K562 (cell line): ENCODE measurements at regions of chr1 and their contacts with region 1.

Region 1: DNA sequence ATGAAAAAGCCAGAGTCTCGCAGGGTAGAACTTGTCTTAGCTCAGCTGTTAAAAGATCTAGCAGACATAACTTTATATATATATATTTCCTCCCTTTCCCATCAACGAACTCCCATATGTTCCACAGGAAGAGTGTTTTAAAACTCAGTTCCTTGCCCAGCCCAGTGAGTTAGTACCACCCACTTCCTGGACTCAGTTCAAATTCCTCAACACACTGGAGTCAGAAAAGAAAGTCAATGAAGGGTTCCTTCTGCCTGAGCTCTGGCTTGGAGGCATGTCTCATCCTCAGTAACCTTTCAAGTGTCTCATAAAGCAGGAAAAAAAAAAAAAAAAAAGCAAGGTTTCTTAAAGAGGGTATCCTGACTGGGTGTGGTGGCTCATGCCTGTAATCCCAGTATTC is 15.6 kb downstream of the TPM3 start:
- DNase-seq: no peak
- ATAC-seq: no peak
- H3K4me3 ChIP-seq: no peak overlapping the region
- H3K27ac ChIP-seq: no peak overlapping the region
- H3K4me1 ChIP-seq: peaks cover 17 to 40% of the 10 kb centered on the region in 2 experiments; a peak in 4 of 5 replicates
- H3K27me3 ChIP-seq: no peaks in the 10 kb centered on the region
- CTCF ChIP-seq: no peak
- EP300 ChIP-seq: no peak
- POLR2A ChIP-seq: no peak
- RAD21 ChIP-seq: no peak

Region 2: GRCh38 chr1:154166207-154166606 is 10.1 kb before region 1 on chr1:
- CTCF ChIA-PET with region 1: no interaction called
- POLR2A ChIA-PET with region 1: interaction called, 17 read pairs
- in situ Hi-C with region 1: no loop called
- intact Hi-C with region 1: no loop called
- DNase-seq: no peak
- ATAC-seq: no peak
- H3K4me3 ChIP-seq: no peak overlapping the region
- H3K27ac ChIP-seq: no peak overlapping the region
- H3K4me1 ChIP-seq: no peaks in the 10 kb centered on the region
- H3K27me3 ChIP-seq: no peaks in the 10 kb centered on the region
- CTCF ChIP-seq: no peak
- EP300 ChIP-seq: no peak
- POLR2A ChIP-seq: no peak
- RAD21 ChIP-seq: no peak